Activated CD4-positive, alpha-beta T cell treated with anti-CD3 and anti-CD28 coated beads for 36 hours (primary cell): ENCODE measurements at regions of chr20 and their contacts with region 1.

Region 1: DNA sequence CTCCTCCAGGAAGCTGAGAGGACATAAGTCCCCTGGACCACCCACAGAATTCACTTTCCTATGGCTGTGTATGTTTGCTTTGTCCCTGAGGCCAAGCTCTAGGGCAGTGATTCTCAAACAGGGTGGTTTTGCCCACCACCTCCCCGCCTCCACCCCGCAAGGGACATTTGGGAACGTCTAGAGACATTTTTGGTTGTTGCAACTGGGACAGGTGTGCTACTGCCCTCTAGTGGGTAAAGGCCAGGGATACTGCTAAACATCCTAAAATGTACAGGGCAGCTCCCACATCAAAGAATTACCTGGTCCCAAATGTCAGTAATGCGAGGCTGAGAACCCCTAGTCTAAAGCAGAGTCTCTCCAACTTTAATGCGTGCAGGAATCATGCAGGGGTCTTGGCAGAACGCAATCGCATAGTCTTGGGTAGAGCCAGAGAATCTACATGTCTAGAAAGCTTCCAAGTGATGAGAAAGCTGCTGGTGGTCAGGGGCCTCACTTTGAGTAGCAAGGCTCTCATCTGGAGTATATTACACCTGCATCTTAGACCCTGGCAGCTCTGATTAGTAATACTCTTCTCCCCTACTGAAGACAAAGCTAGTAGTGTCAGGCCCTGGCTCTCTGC is 5.1 kb downstream of the KCNS1 start:
- DNase-seq: peak; percentile 76
- ATAC-seq: peak; percentile 44
- H3K4me3 Mint-ChIP-seq: no peak overlapping the region
- H3K27ac Mint-ChIP-seq: no peak overlapping the region
- H3K4me1 Mint-ChIP-seq: peaks cover 11% of the 10 kb centered on the region
- H3K27me3 Mint-ChIP-seq: peaks cover 30% of the 10 kb centered on the region

Region 2: DNA sequence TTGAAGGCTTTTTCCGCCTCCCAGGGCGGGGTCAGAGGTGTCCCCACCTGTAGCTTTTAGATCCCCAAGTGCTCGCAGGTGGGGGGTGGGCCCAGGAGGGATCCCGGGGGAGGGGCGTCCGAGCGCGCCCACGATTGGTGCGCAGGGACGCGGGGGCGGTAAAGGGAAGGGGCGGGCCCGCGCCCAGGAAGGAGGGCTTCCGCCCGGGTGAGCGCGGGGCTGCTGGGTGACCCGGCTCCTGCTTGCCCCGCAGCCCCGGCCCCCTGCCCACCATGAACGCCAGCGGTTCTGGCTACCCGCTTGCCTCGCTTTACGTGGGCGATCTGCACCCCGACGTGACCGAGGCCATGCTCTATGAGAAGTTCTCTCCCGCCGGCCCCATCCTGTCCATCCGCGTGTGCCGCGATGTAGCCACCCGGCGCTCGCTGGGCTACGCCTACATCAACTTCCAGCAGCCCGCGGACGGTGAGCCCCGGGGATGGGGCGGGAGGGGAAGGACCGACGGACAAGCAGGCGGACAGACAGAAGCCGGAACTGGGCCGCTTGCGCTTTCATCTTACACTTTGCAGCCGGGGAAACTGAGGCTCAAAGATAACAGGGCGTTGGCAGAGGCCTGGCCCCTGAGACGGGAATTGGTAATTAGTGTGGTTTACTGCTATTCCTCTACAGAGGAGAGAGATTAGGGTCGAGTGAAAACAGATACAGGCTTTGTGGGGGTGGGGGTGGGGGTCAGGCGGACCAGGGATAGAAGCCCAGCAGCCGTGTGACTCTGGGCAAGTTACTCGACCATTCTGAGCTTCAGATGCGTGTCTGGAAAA is 185.8 kb before region 1 on chr20 and contains the start of gene PABPC1L:
- CTCF ChIA-PET with region 1: interaction called, 12 read pairs
- POLR2A ChIA-PET with region 1: no interaction called
- intact Hi-C with region 1: loop called in 1 of 2 experiments (anchors 1 kb)
- DNase-seq: peak; percentile 86
- ATAC-seq: peak; percentile 90
- H3K4me3 Mint-ChIP-seq: peak within 1 kb of the TSS; percentile 78
- H3K27ac Mint-ChIP-seq: peak within 1 kb of the TSS; percentile 64
- H3K4me1 Mint-ChIP-seq: peaks cover 34% of the 10 kb centered on the region
- H3K27me3 Mint-ChIP-seq: no peaks in the 10 kb centered on the region
- total RNA-seq, gene PABPC1L: 61.7 to 71.3 TPM

Region 3: GRCh38 chr20:44990425-44990824 is 105.4 kb before region 1 on chr20:
- CTCF ChIA-PET with region 1: no interaction called
- POLR2A ChIA-PET with region 1: no interaction called
- intact Hi-C with region 1: no loop called
- DNase-seq: peak; percentile 81
- ATAC-seq: peak; percentile 90
- H3K4me3 Mint-ChIP-seq: peak overlapping the region; percentile 70
- H3K27ac Mint-ChIP-seq: peak overlapping the region; percentile 94
- H3K4me1 Mint-ChIP-seq: peaks cover 78% of the 10 kb centered on the region
- H3K27me3 Mint-ChIP-seq: no peaks in the 10 kb centered on the region

Region 4: GRCh38 chr20:45028424-45029136 is 67.3 kb before region 1 on chr20:
- CTCF ChIA-PET with region 1: interaction called, 14 read pairs
- POLR2A ChIA-PET with region 1: no interaction called
- intact Hi-C with region 1: no loop called
- DNase-seq: peak; percentile 23
- ATAC-seq: peak; percentile 44
- H3K4me3 Mint-ChIP-seq: no peak overlapping the region
- H3K27ac Mint-ChIP-seq: peak overlapping the region; percentile 86
- H3K4me1 Mint-ChIP-seq: peaks cover 75% of the 10 kb centered on the region
- H3K27me3 Mint-ChIP-seq: no peaks in the 10 kb centered on the region

Region 5: DNA sequence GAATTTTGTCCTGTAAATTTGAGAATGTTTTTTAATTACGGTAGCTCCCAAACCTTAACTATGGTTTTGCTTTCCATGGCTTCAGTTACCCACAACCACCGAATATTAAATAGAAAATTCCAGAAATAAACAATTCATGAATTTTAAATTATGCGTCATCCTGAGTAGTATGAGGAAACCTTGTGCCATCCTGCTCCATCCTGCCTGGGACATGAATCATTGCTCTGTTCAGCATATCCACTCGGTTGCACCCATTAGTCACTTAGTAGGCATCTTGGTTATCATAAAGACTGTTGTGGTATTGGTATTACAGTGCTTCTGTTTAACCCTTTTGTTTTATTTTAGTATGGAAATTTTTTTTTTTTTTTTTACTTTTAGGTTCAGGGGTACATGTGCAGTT is 34.6 kb before region 1 on chr20:
- CTCF ChIA-PET with region 1: interaction called, 18 read pairs
- POLR2A ChIA-PET with region 1: no interaction called
- intact Hi-C with region 1: no loop called
- DNase-seq: peak; percentile 32
- ATAC-seq: peak; percentile 94
- H3K4me3 Mint-ChIP-seq: no peak overlapping the region
- H3K27ac Mint-ChIP-seq: no peak overlapping the region
- H3K4me1 Mint-ChIP-seq: peaks cover 76% of the 10 kb centered on the region
- H3K27me3 Mint-ChIP-seq: no peaks in the 10 kb centered on the region

Region 6: GRCh38 chr20:45111799-45112471 is 16.1 kb after region 1 on chr20:
- CTCF ChIA-PET with region 1: interaction called, 26 read pairs
- POLR2A ChIA-PET with region 1: interaction called, 3 read pairs
- intact Hi-C with region 1: loop called in 1 of 2 experiments (anchors 1 kb)
- DNase-seq: peak; percentile 59
- ATAC-seq: peak; percentile 59
- H3K4me3 Mint-ChIP-seq: no peak overlapping the region
- H3K27ac Mint-ChIP-seq: no peak overlapping the region
- H3K4me1 Mint-ChIP-seq: peaks cover 4% of the 10 kb centered on the region
- H3K27me3 Mint-ChIP-seq: peaks cover 1% of the 10 kb centered on the region

Region 7: DNA sequence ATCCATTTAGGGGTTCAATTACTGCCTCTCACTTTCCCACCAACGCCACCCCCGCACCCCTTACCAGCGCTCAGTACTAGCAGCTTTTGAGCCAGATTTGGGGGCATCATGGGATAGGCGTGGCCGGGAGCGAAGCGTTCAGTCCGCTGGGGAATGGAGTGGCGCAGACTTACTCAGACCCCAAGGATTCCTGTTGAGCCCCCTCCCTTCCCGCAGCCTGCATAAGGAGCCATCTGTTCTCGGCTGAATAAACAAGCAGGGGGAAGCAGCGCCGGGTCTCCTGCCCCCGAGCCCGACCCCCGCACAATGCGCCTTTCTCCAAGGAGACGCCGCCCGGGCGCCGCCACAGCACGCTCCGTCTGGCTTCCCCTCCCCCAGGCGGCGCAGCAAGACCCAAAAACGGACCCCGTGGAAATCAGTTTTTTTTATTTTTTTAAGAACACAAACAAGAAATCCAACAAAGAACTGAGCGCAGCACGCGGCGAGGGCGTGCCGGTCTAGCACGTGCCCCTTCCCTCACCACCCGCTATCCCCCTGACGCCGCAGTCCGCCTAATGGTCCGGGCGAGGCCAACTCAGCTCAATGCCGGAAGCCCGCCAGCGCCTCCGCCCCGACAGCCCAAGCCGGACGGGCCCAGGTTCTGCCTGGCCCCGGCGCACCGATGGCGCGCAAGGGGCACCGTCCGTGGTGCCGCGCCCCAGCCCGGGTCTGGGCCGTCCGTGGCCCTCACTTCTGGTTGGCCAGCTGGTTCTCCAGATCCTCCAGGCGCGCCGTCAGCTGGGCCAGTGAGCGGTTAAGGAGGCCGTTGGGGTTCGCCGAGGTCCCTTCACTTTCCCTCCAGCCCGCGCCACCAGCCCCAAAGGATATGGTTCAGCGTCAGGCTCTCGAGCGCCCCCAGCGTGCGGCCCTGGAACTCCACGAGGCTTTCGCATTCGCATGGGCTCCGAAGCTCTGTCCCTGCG is 197.5 kb after region 1 on chr20:
- CTCF ChIA-PET with region 1: interaction called, 45 read pairs
- POLR2A ChIA-PET with region 1: no interaction called
- intact Hi-C with region 1: loop called (anchors 2 to 5 kb)
- DNase-seq: peak; percentile 92
- ATAC-seq: peak; percentile 93
- H3K4me3 Mint-ChIP-seq: peak overlapping the region; percentile 67
- H3K27ac Mint-ChIP-seq: peak overlapping the region; percentile 42
- H3K4me1 Mint-ChIP-seq: peaks cover 3% of the 10 kb centered on the region
- H3K27me3 Mint-ChIP-seq: peaks cover 33% of the 10 kb centered on the region

Region 8: GRCh38 chr20:45576995-45577394 is 481.1 kb after region 1 on chr20:
- CTCF ChIA-PET with region 1: no interaction called
- POLR2A ChIA-PET with region 1: no interaction called
- intact Hi-C with region 1: no loop called
- DNase-seq: no peak
- ATAC-seq: no peak
- H3K4me3 Mint-ChIP-seq: no peak overlapping the region
- H3K27ac Mint-ChIP-seq: no peak overlapping the region
- H3K4me1 Mint-ChIP-seq: no peaks in the 10 kb centered on the region
- H3K27me3 Mint-ChIP-seq: peaks cover 19% of the 10 kb centered on the region